Naive thymus-derived CD4-positive, alpha-beta T cell (primary cell): ENCODE measurements at regions of chr19 and their contacts with region 1.

Region 1: GRCh38 chr19:17282488-17283255 is 971 bp downstream of the ANKLE1 start:
- DNase-seq: peak; percentile 58 to 86 (median 70)
- ATAC-seq: peak; percentile 97
- H3K4me3 ChIP-seq: peak overlapping the region; percentile 62
- H3K4me3 Mint-ChIP-seq: peak overlapping the region; percentile 75 to 90 (median 81)
- H3K27ac ChIP-seq: no peak overlapping the region
- H3K27ac Mint-ChIP-seq: peak overlapping the region in 3 of 9 donors; percentile 56 to 72 (median 62)
- H3K4me1 ChIP-seq: peaks cover 0 to 8% of the 10 kb centered on the region in 2 donors
- H3K4me1 Mint-ChIP-seq: peaks cover 0 to 9% (median 3%) of the 10 kb centered on the region in 7 donors
- H3K27me3 ChIP-seq: no peaks in the 10 kb centered on the region
- H3K27me3 Mint-ChIP-seq: peaks cover 0 to 4% (median 0%) of the 10 kb centered on the region in 5 donors

Region 2: DNA sequence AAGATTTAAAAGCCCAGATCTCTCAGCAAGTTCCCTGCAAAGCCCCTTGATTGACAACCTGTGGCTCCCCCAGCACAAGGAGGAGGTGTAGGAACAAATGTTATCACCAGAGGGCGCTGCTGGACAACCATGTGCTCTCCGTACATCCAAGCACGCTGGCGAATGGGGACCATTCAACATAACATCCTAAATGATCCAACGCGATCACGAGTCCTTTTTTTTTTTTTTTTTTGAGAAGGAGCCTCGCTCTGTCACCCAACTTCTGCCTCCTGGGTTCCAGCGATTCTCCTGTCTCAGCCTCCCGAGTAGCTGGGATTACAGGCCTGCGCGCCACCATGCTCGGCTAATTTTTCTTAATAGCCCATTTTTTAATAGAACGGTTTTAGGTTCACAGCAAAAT is 511.1 kb before region 1 on chr19:
- CTCF ChIA-PET with region 1: interaction called, 3 read pairs
- POLR2A ChIA-PET with region 1: no interaction called
- intact Hi-C with region 1: loop called in 1 of 2 experiments (anchors 5 kb)
- DNase-seq: peak; percentile 33 to 73 (median 59)
- ATAC-seq: peak; percentile 85
- H3K4me3 ChIP-seq: no peak overlapping the region
- H3K4me3 Mint-ChIP-seq: no peak overlapping the region
- H3K27ac ChIP-seq: no peak overlapping the region
- H3K27ac Mint-ChIP-seq: no peak overlapping the region
- H3K4me1 ChIP-seq: no peaks in the 10 kb centered on the region
- H3K4me1 Mint-ChIP-seq: no peaks in the 10 kb centered on the region
- H3K27me3 ChIP-seq: no peaks in the 10 kb centered on the region
- H3K27me3 Mint-ChIP-seq: peaks cover 0 to 43% (median 34%) of the 10 kb centered on the region in 5 donors

Region 3: DNA sequence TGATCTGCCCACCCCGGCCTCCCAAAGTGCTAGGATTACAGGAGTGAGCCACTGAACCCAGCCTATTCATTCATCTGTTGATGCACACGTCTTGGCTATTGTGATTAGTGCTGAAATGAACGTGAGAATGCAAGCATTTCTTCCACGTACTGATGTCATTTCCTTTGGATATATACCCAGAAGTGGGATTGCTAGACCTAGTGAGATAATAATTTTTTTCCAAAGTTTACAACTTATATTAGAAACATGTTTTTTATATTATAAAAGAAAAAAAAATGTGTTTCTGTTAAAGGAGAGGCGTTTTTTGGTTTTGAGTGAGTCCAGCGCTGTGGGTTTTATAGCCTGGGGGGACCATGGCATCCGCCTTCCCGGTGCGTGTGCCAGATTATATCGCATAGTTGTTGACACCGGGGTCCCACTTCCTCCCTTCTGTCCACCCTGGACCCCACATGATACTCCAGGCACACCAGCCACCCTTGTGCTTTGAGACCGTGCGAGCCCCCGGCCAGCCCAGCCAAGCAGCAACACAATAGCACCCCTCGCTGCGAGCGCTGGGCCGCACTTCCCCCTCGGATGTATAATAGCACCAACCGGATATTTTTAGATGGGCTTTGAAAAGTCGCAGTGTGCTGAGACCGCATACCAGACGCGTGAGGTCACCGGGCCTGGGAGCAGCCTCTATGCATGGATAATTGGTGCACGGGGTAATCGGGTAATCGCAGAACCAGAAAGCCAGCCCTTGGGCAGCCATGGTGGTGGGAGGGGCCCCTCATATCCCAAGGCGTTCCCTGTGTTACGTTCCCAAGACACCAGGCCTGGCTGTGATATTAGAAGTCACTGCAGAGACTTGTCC is 147.4 kb before region 1 on chr19:
- CTCF ChIA-PET with region 1: no interaction called
- POLR2A ChIA-PET with region 1: no interaction called
- intact Hi-C with region 1: loop called in 1 of 2 experiments (anchors 5 kb)
- DNase-seq: peak in 8 of 9 donors; percentile 19 to 54 (median 46)
- ATAC-seq: peak; percentile 73
- H3K4me3 ChIP-seq: no peak overlapping the region
- H3K4me3 Mint-ChIP-seq: peak overlapping the region; percentile 41 to 89 (median 79)
- H3K27ac ChIP-seq: no peak overlapping the region
- H3K27ac Mint-ChIP-seq: peak overlapping the region; percentile 40 to 92 (median 85)
- H3K4me1 ChIP-seq: peaks cover 4 to 11% of the 10 kb centered on the region in 2 donors
- H3K4me1 Mint-ChIP-seq: peaks cover 0 to 34% (median 23%) of the 10 kb centered on the region in 7 donors
- H3K27me3 ChIP-seq: no peaks in the 10 kb centered on the region
- H3K27me3 Mint-ChIP-seq: no peaks in the 10 kb centered on the region

Region 4: DNA sequence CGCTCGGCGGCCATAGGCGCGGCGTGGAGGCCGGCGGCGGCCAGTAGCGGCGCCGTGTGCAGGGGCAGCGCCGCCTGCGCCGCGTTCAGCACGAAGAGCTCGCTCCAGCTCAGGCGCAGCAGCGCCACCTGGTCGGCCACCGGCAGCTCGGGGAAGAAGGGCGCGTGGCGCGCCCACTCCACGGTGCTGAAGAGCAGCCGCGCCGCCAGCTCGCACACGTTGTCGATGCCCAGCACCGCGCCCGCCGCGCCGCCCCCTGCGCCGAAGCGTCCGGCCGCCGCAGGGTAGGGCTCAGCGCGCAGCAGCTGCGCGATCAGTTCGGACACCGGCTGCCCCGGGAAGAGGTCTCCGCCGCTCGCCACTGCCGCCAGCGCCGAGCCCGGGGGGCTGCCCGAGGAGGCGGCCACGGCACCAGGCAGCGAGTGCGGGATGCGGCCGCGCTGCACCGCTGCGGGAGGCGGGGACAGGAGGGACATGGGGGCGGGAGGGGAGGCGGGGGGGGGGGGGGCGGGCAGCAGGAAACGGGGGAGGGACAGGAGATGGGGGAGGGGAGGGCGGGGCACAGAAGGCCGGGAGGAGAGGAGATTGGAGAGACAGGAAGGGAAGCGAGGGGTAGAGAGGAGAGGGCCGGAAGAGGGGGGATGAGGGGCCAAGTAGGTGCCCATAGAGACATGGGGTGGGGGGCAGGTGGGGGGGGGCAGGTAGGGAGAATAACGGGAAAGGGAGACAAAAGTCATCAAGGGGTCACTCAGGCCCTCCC is 46.9 kb before region 1 on chr19:
- CTCF ChIA-PET with region 1: no interaction called
- POLR2A ChIA-PET with region 1: no interaction called
- intact Hi-C with region 1: loop called in 1 of 2 experiments (anchors 2 kb)
- DNase-seq: peak; percentile 62 to 75 (median 73)
- ATAC-seq: peak; percentile 95
- H3K4me3 ChIP-seq: peak overlapping the region; percentile 74
- H3K4me3 Mint-ChIP-seq: peak overlapping the region in 9 of 10 donors; percentile 49 to 88 (median 83)
- H3K27ac ChIP-seq: peak overlapping the region; percentile 64
- H3K27ac Mint-ChIP-seq: peak overlapping the region in 1 of 9 donors; percentile 23
- H3K4me1 ChIP-seq: peaks cover 0 to 11% of the 10 kb centered on the region in 2 donors
- H3K4me1 Mint-ChIP-seq: peaks cover 4 to 22% (median 16%) of the 10 kb centered on the region in 7 donors
- H3K27me3 ChIP-seq: no peaks in the 10 kb centered on the region
- H3K27me3 Mint-ChIP-seq: no peaks in the 10 kb centered on the region